ENCODE measurements at regions of chr7 and their contacts with region 1.

Region 1: DNA sequence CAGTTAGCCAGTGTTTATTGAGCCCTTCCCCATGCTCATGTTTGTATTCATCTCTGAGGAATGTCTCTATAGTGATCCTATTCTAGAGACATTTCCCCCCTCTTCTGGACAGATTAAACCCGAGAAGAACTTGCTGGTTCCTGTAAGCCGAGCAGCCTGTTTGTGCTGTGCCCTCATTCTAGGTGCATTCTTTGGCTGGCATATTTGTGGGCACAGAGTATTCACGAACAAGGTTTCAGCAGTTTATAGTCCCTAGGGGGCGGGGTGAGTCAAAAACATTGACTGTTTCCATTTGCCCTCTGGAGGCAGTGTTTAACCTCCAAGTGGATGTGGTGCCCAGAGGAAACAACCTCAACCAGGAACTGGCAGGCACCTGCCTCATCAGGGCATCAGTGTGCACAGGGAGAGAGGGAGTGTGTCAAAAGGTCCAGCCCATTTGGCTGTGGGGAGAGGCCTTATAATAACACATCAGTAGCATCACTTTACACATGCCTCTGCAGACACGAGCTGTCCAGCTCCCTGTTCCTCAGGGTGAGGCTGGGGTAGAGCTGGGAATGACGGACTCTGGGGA is 273.3 kb upstream of the LRGUK start:
- DNase-seq: peak; percentile 82 to 87
- H3K4me3 ChIP-seq: no peak overlapping the region
- H3K27ac ChIP-seq: peak overlapping the region; percentile 31
- H3K4me1 ChIP-seq: peaks cover 9% of the 10 kb centered on the region
- H3K27me3 ChIP-seq: no peaks in the 10 kb centered on the region
- CTCF ChIP-seq: peak; percentile 64; the same call in 1 of the 2 replicates

Region 2: GRCh38 chr7:133135451-133135850 is 718.3 kb before region 1 on chr7:
- CTCF ChIA-PET with region 1: no interaction called
- POLR2A ChIA-PET with region 1: no interaction called
- intact Hi-C with region 1: no loop called
- DNase-seq: no peak
- H3K4me3 ChIP-seq: no peak overlapping the region
- H3K27ac ChIP-seq: no peak overlapping the region
- H3K4me1 ChIP-seq: no peaks in the 10 kb centered on the region
- H3K27me3 ChIP-seq: peaks cover 88% of the 10 kb centered on the region
- CTCF ChIP-seq: no peak

Region 3: DNA sequence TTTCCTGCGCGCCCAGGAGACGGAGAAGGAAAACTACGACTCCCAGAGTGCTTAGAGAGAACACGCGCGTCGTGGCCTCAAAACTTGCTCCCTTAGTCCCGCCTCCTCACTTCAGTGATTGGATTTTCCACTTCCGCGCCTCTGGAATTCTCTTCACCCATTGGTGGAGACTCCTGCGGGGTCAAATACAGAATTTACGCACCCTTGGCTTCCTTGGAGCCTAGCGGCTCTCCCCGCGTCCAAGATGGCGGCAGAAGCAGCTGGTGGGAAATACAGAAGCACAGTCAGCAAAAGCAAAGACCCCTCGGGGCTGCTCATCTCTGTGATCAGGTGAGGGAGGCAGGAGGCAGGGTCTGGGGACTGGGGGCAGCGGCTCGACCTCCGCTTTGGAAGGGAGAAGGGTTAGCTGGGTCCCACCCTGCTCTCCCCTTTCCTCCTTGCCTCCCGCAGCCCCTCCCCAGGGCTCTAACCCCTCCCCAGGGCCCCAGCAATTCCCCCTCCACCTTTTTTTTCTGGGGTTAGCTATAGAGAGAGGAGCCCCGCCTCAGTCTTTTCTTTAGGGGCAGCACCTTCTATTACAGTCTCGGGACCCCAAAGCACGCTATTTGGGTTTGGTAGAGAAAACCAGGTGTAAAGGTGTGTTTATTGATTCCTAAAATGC is 600.8 kb before region 1 on chr7 and contains the start of gene EXOC4:
- CTCF ChIA-PET with region 1: no interaction called
- POLR2A ChIA-PET with region 1: no interaction called
- intact Hi-C with region 1: loop called (anchors 10 kb)
- DNase-seq: peak; percentile 94 to 96
- H3K4me3 ChIP-seq: peak within 1 kb of the TSS; percentile 86
- H3K27ac ChIP-seq: peak within 1 kb of the TSS; percentile 27
- H3K4me1 ChIP-seq: peaks cover 12% of the 10 kb centered on the region
- H3K27me3 ChIP-seq: no peaks in the 10 kb centered on the region
- CTCF ChIP-seq: no peak
- total RNA-seq, gene EXOC4: 88.5 and 101 TPM in 2 replicates

Region 4: DNA sequence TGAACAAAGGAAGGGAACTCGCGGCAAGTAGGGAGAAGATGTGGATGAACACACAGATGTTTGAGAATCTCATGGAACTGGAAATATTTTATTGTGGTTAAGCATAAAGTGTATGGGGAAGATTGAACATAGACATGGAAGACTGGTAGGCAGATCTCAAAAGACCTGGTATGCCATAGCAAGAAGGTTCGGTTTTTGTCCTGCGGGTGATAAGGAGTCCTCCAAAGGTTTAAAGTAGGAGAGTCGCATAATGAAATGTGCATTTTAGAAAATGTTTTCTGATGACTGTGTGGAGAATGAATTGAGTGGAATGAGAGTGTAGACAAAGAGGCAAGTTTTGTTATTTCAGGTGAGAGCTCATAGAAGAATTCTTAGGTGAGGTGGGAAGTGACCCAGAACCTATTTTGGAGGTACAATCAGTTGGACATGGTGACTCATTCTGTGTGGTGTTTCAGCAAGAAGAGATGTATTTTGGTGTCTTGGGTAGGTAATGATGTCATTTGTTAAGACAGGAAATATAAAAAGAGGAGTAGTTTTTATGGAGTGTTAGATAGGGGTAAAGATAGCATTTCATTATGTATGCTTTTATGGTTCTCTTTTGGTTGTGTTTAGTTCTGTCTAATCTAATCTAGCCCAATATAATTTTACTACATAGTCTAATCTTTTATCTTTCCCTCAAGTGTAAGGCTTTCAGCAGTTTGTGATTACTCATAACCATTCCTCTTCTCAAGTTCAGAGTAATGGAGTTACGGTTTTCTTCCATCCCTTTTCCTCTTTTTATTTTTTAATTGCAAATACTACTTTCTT is 361.7 kb before region 1 on chr7:
- CTCF ChIA-PET with region 1: no interaction called
- POLR2A ChIA-PET with region 1: no interaction called
- intact Hi-C with region 1: loop called (anchors 5 kb)
- DNase-seq: peak; percentile 25 to 45
- H3K4me3 ChIP-seq: no peak overlapping the region
- H3K27ac ChIP-seq: no peak overlapping the region
- H3K4me1 ChIP-seq: peaks cover 10% of the 10 kb centered on the region
- H3K27me3 ChIP-seq: no peaks in the 10 kb centered on the region
- CTCF ChIP-seq: no peak

Region 5: GRCh38 chr7:133512560-133512959 is 341.2 kb before region 1 on chr7:
- CTCF ChIA-PET with region 1: no interaction called
- POLR2A ChIA-PET with region 1: no interaction called
- intact Hi-C with region 1: loop called (anchors 1 kb)
- DNase-seq: peak in 1 of 2 experiments; percentile 38
- H3K4me3 ChIP-seq: no peak overlapping the region
- H3K27ac ChIP-seq: no peak overlapping the region
- H3K4me1 ChIP-seq: peaks cover 8% of the 10 kb centered on the region
- H3K27me3 ChIP-seq: no peaks in the 10 kb centered on the region
- CTCF ChIP-seq: no peak

Region 6: GRCh38 chr7:133705596-133705995 is 148.2 kb before region 1 on chr7:
- CTCF ChIA-PET with region 1: no interaction called
- POLR2A ChIA-PET with region 1: no interaction called
- intact Hi-C with region 1: loop called (anchors 5 kb)
- DNase-seq: peak; percentile 9 to 35
- H3K4me3 ChIP-seq: no peak overlapping the region
- H3K27ac ChIP-seq: 0 out of 2 replicates have a peak overlapping the region, but pooled peaks have one; percentile 44
- H3K4me1 ChIP-seq: no peaks in the 10 kb centered on the region
- H3K27me3 ChIP-seq: no peaks in the 10 kb centered on the region
- CTCF ChIP-seq: no peak

Region 7: GRCh38 chr7:133753513-133753912 is 100.3 kb before region 1 on chr7:
- CTCF ChIA-PET with region 1: no interaction called
- POLR2A ChIA-PET with region 1: no interaction called
- intact Hi-C with region 1: loop called (anchors 5 kb)
- DNase-seq: peak; percentile 37 to 66
- H3K4me3 ChIP-seq: no peak overlapping the region
- H3K27ac ChIP-seq: no peak overlapping the region
- H3K4me1 ChIP-seq: peaks cover 7% of the 10 kb centered on the region; the same call in 1 of the 2 replicates
- H3K27me3 ChIP-seq: no peaks in the 10 kb centered on the region
- CTCF ChIP-seq: no peak

Region 8: DNA sequence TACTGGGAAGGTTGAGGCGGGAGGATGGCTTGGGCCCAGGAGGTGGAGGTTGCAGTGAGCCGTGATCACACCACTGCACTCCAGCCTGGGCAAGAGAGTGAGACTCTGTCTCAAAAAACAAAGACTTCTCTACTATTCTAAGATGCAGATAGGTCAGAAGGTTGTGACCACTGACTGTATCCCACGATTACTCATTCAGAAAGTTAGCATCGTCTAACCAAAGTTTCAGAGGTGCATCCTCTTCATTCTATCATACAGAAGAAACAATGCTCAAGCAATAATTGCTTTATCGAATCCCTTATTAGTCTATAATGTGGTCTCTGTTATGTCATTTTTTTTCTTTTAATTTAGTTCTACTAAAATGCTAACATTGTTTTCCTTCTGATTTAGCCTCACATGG is 75.3 kb before region 1 on chr7:
- CTCF ChIA-PET with region 1: no interaction called
- POLR2A ChIA-PET with region 1: no interaction called
- intact Hi-C with region 1: no loop called
- DNase-seq: no peak
- H3K4me3 ChIP-seq: no peak overlapping the region
- H3K27ac ChIP-seq: no peak overlapping the region
- H3K4me1 ChIP-seq: no peaks in the 10 kb centered on the region
- H3K27me3 ChIP-seq: no peaks in the 10 kb centered on the region
- CTCF ChIP-seq: no peak

Measured in PC-9 (cell line).